PC-3 (cell line): ENCODE measurements at regions of chr12 and their contacts with region 1.

Region 1: GRCh38 chr12:21065845-21066244 is 65.1 kb upstream of the SLCO1B1 start:
- DNase-seq: peak; percentile 50
- ATAC-seq: peak; percentile 64
- H3K4me3 ChIP-seq: no peak overlapping the region
- H3K27ac ChIP-seq: no peak overlapping the region
- H3K4me1 ChIP-seq: no peaks in the 10 kb centered on the region
- H3K27me3 ChIP-seq: no peaks in the 10 kb centered on the region
- CTCF ChIP-seq: peak; percentile 54

Region 2: DNA sequence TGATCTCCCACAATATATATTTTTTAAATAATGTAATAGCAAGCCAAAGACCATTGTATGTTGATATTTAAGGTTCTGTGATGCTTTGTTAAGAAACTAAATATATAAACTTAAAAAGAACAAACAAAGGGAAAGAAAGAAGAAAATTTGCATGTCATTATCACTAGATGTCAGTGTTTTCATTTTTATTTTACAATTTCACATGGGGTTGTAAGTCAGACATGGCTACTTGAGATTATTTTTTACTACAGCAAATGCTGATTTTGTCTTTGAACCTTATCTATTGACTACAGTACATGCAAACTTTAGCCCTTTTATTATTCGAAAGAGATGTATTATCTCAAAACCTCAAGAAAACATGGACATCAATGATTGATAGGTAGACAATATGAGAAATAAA is 334.6 kb before region 1 on chr12:
- CTCF ChIA-PET with region 1: no interaction called
- POLR2A ChIA-PET with region 1: no interaction called
- intact Hi-C with region 1: loop called (anchors 5 kb)
- DNase-seq: no peak
- ATAC-seq: no peak
- H3K4me3 ChIP-seq: no peak overlapping the region
- H3K27ac ChIP-seq: no peak overlapping the region
- H3K4me1 ChIP-seq: no peaks in the 10 kb centered on the region
- H3K27me3 ChIP-seq: no peaks in the 10 kb centered on the region
- CTCF ChIP-seq: 0 out of 2 replicates have a peak, but pooled peaks have one; percentile 22

Region 3: DNA sequence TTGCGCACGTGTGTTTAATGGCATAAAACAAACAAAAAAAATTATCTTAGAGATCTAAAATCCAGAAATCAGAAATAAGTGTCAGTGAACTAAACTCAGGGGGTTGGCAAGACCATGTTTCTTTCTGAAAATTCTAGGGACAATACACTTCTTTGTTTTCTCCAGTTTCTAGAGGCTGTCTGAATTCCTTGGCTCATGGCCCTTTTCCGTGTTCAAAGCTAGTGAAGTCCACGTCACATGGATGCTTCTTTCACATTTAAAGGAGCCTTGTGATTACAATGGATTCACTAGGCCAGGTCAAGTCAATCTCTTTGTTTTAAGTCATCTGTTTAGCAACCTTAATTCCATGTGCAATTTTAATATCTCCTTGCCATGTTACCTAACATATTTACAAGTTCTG is 232.9 kb before region 1 on chr12:
- CTCF ChIA-PET with region 1: no interaction called
- POLR2A ChIA-PET with region 1: no interaction called
- intact Hi-C with region 1: loop called (anchors 10 kb)
- DNase-seq: no peak
- ATAC-seq: no peak
- H3K4me3 ChIP-seq: no peak overlapping the region
- H3K27ac ChIP-seq: no peak overlapping the region
- H3K4me1 ChIP-seq: peaks cover 28% of the 10 kb centered on the region
- H3K27me3 ChIP-seq: no peaks in the 10 kb centered on the region
- CTCF ChIP-seq: no peak

Region 4: GRCh38 chr12:20950248-20950647 is 115.6 kb before region 1 on chr12:
- CTCF ChIA-PET with region 1: no interaction called
- POLR2A ChIA-PET with region 1: no interaction called
- intact Hi-C with region 1: loop called (anchors 2 kb)
- DNase-seq: peak; percentile 58
- ATAC-seq: peak; percentile 58
- H3K4me3 ChIP-seq: no peak overlapping the region
- H3K27ac ChIP-seq: no peak overlapping the region
- H3K4me1 ChIP-seq: no peaks in the 10 kb centered on the region
- H3K27me3 ChIP-seq: no peaks in the 10 kb centered on the region
- CTCF ChIP-seq: peak; percentile 64

Region 5: DNA sequence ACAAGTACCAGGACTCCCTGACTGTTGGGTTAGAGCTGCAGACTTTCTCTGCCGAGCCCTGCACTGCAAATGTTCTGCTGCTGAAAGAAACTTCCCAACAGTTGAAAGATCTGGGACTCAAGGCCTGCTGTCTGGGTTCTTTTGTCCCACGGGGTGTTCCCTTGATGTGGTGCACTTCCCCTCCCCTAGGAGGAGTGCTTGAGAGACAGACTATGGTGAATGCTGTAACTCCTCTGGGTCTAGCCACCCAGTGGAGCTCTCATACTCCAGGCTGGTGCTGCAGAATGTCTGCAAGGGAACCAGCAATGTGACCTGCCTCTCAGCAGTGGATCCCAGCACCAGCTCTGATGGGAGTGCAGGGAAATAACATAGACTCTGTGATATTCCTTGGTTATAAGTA is 64.1 kb before region 1 on chr12:
- CTCF ChIA-PET with region 1: no interaction called
- POLR2A ChIA-PET with region 1: no interaction called
- intact Hi-C with region 1: no loop called
- DNase-seq: no peak
- ATAC-seq: no peak
- H3K4me3 ChIP-seq: no peak overlapping the region
- H3K27ac ChIP-seq: no peak overlapping the region
- H3K4me1 ChIP-seq: no peaks in the 10 kb centered on the region
- H3K27me3 ChIP-seq: no peaks in the 10 kb centered on the region
- CTCF ChIP-seq: no peak

Region 6: GRCh38 chr12:21169878-21170472 is 104.1 kb after region 1 on chr12:
- CTCF ChIA-PET with region 1: no interaction called
- POLR2A ChIA-PET with region 1: no interaction called
- intact Hi-C with region 1: loop called (anchors 10 kb)
- DNase-seq: peak; percentile 54
- ATAC-seq: no peak
- H3K4me3 ChIP-seq: no peak overlapping the region
- H3K27ac ChIP-seq: no peak overlapping the region
- H3K4me1 ChIP-seq: no peaks in the 10 kb centered on the region
- H3K27me3 ChIP-seq: no peaks in the 10 kb centered on the region
- CTCF ChIP-seq: peak; percentile 85

Region 7: DNA sequence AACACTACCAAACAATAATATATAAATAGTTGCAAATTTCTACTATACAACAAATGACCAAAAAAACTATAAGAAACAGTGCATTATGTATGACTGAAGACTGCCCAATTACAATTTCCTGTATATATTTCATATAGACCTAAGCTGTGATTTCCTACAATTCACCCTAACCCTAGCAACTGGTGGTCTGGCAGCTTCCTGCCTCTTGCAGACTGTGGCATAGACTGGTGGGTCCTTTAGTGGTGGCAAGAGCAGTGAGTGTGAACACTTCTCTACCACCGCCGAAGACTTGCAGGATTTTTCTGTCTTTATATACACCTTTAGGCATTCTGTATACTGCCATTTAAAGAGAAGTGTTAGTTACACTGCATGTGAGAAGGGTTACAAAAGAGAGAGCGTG is 936.6 kb after region 1 on chr12:
- CTCF ChIA-PET with region 1: no interaction called
- POLR2A ChIA-PET with region 1: no interaction called
- intact Hi-C with region 1: no loop called
- DNase-seq: no peak
- ATAC-seq: no peak
- H3K4me3 ChIP-seq: no peak overlapping the region
- H3K27ac ChIP-seq: no peak overlapping the region
- H3K4me1 ChIP-seq: no peaks in the 10 kb centered on the region
- H3K27me3 ChIP-seq: no peaks in the 10 kb centered on the region
- CTCF ChIP-seq: no peak